CD4-positive, alpha-beta T cell (primary cell): ENCODE measurements at regions of chr2 and their contacts with region 1.

Region 1: DNA sequence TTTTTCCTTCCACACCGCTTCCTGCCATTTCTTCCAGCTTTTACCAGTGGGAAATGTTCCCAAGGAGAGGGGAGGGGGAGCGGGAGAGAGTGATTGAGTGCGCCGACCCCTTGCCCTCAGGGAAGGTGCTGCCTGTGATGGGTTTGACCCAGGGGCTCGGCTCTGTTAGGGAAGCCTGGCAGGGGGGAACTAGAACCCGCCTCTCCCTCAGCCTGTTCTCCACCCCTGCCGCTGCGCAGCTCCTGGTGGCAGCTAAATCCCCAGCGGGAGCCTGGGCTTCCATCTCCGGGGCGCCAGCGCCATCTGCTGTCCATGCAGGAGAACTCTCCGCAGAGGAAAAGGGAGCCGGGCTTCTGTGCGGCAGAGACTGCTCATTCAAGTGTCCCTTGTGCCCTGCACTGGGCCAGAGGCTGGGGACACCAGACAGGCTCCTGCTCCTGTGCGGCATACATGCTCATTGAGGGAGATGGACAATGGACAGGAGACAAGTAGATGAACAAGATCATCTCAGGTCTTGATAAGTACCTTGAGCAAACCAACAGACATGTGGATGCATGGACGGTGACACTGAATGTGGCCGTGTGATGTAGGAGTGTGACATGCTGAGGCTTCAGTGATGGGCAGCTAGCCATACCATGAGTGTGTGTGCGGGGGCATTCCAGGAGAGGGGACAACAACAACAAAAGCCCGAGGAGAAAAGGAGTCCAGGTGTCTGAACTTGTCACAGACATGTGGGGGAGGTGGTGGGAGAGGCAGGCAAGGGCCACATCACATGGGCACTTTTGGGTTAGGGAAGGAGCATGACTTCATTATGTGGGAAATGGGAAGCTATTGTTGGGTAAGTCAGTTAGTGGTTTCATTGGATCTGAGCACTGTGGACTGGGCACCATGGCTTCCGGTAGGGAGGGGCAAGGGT is 13.3 kb downstream of the CHPF start:
- DNase-seq: peak; percentile 75 to 91 (median 83)
- ATAC-seq: peak; percentile 99
- H3K4me3 ChIP-seq: no peak overlapping the region
- H3K4me3 Mint-ChIP-seq: no peak overlapping the region
- H3K27ac ChIP-seq: no peak overlapping the region
- H3K27ac Mint-ChIP-seq: no peak overlapping the region
- H3K4me1 ChIP-seq: peaks cover 4% of the 10 kb centered on the region
- H3K4me1 Mint-ChIP-seq: no peaks in the 10 kb centered on the region
- H3K27me3 ChIP-seq: peaks cover 36 to 49% of the 10 kb centered on the region in 2 experiments
- H3K27me3 Mint-ChIP-seq: peaks cover 75% of the 10 kb centered on the region
- CTCF ChIP-seq: peak; percentile 98

Region 2: GRCh38 chr2:218063486-218063885 is 1466.8 kb before region 1 on chr2:
- CTCF ChIA-PET with region 1: no interaction called
- POLR2A ChIA-PET with region 1: no interaction called
- intact Hi-C with region 1: no loop called
- DNase-seq: peak in 3 of 14 experiments; percentile 15 to 60 (median 58)
- ATAC-seq: peak; percentile 8
- H3K4me3 ChIP-seq: no peak overlapping the region
- H3K4me3 Mint-ChIP-seq: no peak overlapping the region
- H3K27ac ChIP-seq: no peak overlapping the region
- H3K27ac Mint-ChIP-seq: no peak overlapping the region
- H3K4me1 ChIP-seq: peaks cover 2% of the 10 kb centered on the region
- H3K4me1 Mint-ChIP-seq: peaks cover under 1% of the 10 kb centered on the region
- H3K27me3 ChIP-seq: peaks cover 8 to 10% of the 10 kb centered on the region in 2 experiments
- H3K27me3 Mint-ChIP-seq: peaks cover 30% of the 10 kb centered on the region
- CTCF ChIP-seq: no peak

Region 3: GRCh38 chr2:219402665-219403515 is 127.4 kb before region 1 on chr2:
- CTCF ChIA-PET with region 1: interaction called, 35 read pairs
- POLR2A ChIA-PET with region 1: interaction called, 4 read pairs
- intact Hi-C with region 1: loop called (anchors 1 kb)
- DNase-seq: peak; percentile 35 to 81 (median 48)
- ATAC-seq: peak; percentile 99
- H3K4me3 ChIP-seq: no peak overlapping the region
- H3K4me3 Mint-ChIP-seq: no peak overlapping the region
- H3K27ac ChIP-seq: no peak overlapping the region
- H3K27ac Mint-ChIP-seq: no peak overlapping the region
- H3K4me1 ChIP-seq: peaks cover under 1% of the 10 kb centered on the region
- H3K4me1 Mint-ChIP-seq: peaks cover 5% of the 10 kb centered on the region
- H3K27me3 ChIP-seq: peaks cover 0 to 2% of the 10 kb centered on the region in 2 experiments
- H3K27me3 Mint-ChIP-seq: peaks cover 14% of the 10 kb centered on the region
- CTCF ChIP-seq: peak; percentile 92

Region 4: DNA sequence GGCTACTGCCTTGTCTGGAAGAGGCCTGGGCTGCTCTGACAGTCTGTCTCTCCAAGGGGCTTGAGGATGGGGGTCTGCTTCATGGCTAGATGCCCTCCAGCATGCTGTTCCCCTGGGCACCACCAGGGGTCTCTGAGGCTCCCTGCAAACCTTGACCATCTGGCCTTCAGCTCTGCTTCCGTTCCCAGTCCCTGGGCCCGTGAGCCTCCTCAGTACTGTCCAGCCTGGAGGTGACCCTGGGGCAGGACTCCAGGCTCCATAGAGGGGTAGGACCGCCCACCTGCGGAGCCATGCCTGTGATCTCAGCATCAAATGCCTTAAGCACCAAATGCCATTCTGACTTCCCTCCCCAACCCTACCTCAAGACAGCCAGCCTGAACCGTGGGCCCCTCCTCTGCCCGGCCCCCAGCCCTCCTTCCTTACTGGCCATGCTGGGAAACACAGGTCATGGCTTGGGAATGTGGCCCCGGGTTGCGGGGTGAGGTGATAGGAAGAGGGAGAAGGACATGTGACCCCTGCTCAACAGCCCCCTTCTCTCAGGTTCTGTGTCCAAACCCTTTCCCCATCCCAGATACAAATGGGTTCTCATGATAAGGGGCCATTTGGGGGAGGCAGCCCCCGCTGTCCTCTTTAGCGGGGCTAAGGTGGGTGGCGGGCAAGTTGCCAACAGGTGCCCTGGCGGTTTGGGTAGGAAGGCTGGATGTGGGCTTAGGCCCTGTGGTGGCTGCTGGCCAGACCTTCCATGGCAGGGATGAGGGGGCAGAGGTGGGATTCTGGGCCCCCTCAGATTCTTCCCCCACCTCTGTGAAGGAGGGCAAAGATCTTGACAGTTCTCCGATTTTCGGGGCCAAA is 70.6 kb before region 1 on chr2:
- CTCF ChIA-PET with region 1: interaction called, 11 read pairs
- POLR2A ChIA-PET with region 1: no interaction called
- intact Hi-C with region 1: loop called (anchors 1 kb)
- DNase-seq: peak in 9 of 14 experiments; percentile 12 to 58 (median 33)
- ATAC-seq: peak; percentile 56
- H3K4me3 ChIP-seq: no peak overlapping the region
- H3K4me3 Mint-ChIP-seq: no peak overlapping the region
- H3K27ac ChIP-seq: no peak overlapping the region
- H3K27ac Mint-ChIP-seq: no peak overlapping the region
- H3K4me1 ChIP-seq: peaks cover 8% of the 10 kb centered on the region
- H3K4me1 Mint-ChIP-seq: peaks cover 6% of the 10 kb centered on the region
- H3K27me3 ChIP-seq: no peaks in the 10 kb centered on the region
- H3K27me3 Mint-ChIP-seq: no peaks in the 10 kb centered on the region
- CTCF ChIP-seq: peak; percentile 75

Region 5: DNA sequence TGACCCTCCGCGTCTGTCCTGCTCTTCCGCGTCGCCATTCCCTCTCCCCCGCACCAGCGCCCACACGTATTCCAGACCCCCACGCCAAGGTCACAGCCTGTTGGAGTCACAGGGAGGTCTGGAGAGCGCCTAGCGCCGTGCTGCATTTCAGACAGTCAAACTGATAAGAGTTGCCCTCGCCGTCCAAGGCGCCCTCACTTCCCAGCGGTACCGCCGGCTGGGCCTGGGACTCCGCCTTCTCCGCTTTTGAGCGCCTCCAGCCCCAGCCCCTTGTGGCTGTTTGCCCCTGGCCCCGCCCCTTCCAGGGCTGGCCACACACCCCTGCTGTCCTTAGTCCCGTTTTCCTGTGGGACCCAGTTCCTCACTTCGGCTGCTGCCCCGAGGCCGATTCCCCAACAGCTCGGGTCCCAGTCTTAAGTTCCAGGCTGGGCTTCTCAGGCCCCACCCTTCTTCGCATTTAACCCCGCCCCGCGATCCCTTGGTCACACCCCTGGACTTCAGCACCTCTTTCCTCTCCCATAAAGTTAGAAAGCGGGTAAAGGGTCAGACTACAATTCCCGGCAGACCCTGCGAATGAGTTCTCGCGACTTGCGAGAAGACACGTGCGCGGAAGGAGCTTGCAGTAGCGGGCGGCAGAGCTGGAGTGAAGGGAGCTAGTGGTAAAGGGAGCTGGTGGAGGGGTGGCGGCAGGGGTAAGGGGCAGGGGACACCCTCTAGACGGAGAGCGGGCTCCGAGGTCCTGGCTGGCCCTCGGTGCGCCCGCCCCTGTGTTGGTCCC is 31.8 kb before region 1 on chr2 and contains the start of gene GMPPA:
- CTCF ChIA-PET with region 1: interaction called, 29 read pairs
- POLR2A ChIA-PET with region 1: interaction called, 11 read pairs
- intact Hi-C with region 1: loop called (anchors 1 kb)
- DNase-seq: peak; percentile 82 to 97 (median 88)
- ATAC-seq: peak; percentile 94
- H3K4me3 ChIP-seq: peak within 1 kb of the TSS; percentile 91
- H3K4me3 Mint-ChIP-seq: peak within 1 kb of the TSS; percentile 93
- H3K27ac ChIP-seq: peak within 1 kb of the TSS in 1 of 2 donors; percentile 45
- H3K27ac Mint-ChIP-seq: peak within 1 kb of the TSS; percentile 63
- H3K4me1 ChIP-seq: peaks cover 44% of the 10 kb centered on the region
- H3K4me1 Mint-ChIP-seq: peaks cover 37% of the 10 kb centered on the region
- H3K27me3 ChIP-seq: peaks cover 40 to 43% of the 10 kb centered on the region in 2 experiments
- H3K27me3 Mint-ChIP-seq: peaks cover 49% of the 10 kb centered on the region
- CTCF ChIP-seq: no peak
- total RNA-seq, gene GMPPA: 13.3 to 14.4 TPM

Region 6: DNA sequence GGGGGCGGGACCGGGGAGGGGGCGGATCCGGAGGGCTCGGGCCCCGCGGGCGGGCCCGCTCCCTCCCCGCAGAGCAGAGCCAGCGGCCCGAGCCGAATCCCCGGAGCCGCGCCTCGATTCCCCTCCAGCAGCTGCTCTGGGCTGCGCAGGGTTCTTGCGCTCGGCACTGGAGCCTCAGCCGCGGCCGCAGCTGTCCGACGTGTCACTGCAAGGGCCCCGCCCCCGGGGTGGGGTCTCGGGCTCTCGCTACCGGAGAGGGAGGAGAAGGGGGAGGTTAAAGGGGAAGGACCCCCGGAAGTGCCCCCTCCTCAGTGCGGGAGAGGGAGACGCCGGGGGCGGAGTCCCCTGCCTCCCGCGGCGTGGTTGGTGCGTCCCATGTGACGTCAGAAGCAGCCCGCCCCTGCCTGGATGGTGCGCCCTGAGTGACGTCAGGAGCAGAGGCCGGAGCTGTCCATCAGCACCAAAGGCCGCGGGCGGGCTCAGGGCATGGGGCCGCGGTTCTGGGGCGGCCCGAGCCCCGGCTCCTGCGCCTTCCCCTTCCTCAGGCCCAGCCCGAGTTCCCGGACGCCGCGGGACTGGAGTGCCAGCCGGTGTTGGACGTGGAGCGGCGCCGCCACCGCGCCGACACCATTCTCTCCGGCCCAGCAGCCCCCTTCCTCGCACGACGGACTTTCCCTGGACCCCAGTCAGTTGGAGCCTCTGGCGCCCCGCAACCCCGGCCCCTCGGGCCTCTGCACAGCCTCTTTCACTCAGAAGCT is 13.5 kb after region 1 on chr2 and contains the starts of genes CHPF and TMEM198:
- CTCF ChIA-PET with region 1: interaction called, 27 read pairs
- POLR2A ChIA-PET with region 1: no interaction called
- intact Hi-C with region 1: no loop called
- DNase-seq: peak; percentile 83 to 97 (median 90)
- ATAC-seq: peak; percentile 69
- H3K4me3 ChIP-seq: peak within 1 kb of the TSS; percentile 72
- H3K4me3 Mint-ChIP-seq: peak within 1 kb of the TSS; percentile 86
- H3K27ac ChIP-seq: peak within 1 kb of the TSS; percentile 54 to 60
- H3K27ac Mint-ChIP-seq: peak within 1 kb of the TSS; percentile 75
- H3K4me1 ChIP-seq: peaks cover 32% of the 10 kb centered on the region
- H3K4me1 Mint-ChIP-seq: peaks cover 22% of the 10 kb centered on the region
- H3K27me3 ChIP-seq: no peaks in the 10 kb centered on the region
- H3K27me3 Mint-ChIP-seq: peaks cover 7% of the 10 kb centered on the region
- CTCF ChIP-seq: no peak
- total RNA-seq, gene CHPF: 6.5 to 7.1 TPM
- total RNA-seq, gene TMEM198: 0.47 to 0.91 TPM

Region 7: DNA sequence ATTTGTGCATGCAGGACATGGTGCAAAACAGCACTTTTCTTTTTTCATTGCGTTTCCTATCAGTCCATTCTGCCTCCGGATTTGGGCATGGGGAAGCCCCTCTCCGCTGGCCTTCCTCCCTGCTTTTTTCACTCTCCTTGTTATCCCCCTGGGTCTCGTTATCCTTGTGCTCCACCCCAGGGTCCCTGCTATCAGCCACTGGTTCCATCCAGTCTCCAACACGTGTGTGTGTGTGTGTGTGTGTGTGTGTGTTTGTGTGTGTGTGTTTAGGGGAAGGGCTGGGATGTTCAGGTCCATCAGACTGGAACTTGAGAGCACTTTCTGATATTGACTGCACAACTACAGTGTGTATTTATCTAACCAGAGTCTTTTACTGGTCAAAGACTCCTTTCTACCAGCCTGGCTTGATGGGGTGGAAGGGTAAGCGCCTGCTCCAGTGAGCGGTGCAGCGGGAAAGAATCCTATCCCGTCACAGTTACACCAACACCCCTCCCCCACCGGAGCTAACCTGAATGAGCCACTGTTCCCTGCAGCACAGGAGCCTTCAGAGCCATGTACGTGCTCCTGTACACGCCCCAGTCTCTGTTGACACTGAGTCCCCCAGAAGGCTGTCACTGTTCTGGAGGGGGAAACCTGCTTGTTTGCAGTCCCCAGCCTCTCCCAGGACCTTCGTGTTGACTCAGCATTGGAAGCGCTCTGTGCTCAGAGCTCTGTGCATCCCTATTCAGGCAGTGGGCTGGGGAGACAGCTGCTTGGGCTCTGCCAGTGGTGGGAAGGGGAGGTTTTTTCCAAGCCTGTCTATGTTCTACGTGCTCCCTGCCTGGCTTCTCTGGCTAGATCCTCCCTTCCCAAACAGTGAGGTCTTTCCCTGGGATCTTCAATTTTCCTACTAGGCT is 46.4 kb after region 1 on chr2:
- CTCF ChIA-PET with region 1: no interaction called
- POLR2A ChIA-PET with region 1: no interaction called
- intact Hi-C with region 1: no loop called
- DNase-seq: no peak
- ATAC-seq: no peak
- H3K4me3 ChIP-seq: no peak overlapping the region
- H3K4me3 Mint-ChIP-seq: no peak overlapping the region
- H3K27ac ChIP-seq: no peak overlapping the region
- H3K27ac Mint-ChIP-seq: no peak overlapping the region
- H3K4me1 ChIP-seq: no peaks in the 10 kb centered on the region
- H3K4me1 Mint-ChIP-seq: no peaks in the 10 kb centered on the region
- H3K27me3 ChIP-seq: peaks cover 15 to 21% of the 10 kb centered on the region in 2 experiments
- H3K27me3 Mint-ChIP-seq: peaks cover 46% of the 10 kb centered on the region
- CTCF ChIP-seq: no peak